ENCODE measurements at regions of chr7 and their contacts with region 1.

Region 1: GRCh38 chr7:9978106-9979064 is 995.3 kb upstream of the PHF14 start:
- DNase-seq: no peak
- ATAC-seq: no peak
- H3K4me3 Mint-ChIP-seq: no peak overlapping the region
- H3K27ac Mint-ChIP-seq: no peak overlapping the region
- H3K4me1 Mint-ChIP-seq: no peaks in the 10 kb centered on the region
- H3K27me3 Mint-ChIP-seq: no peaks in the 10 kb centered on the region

Region 2: DNA sequence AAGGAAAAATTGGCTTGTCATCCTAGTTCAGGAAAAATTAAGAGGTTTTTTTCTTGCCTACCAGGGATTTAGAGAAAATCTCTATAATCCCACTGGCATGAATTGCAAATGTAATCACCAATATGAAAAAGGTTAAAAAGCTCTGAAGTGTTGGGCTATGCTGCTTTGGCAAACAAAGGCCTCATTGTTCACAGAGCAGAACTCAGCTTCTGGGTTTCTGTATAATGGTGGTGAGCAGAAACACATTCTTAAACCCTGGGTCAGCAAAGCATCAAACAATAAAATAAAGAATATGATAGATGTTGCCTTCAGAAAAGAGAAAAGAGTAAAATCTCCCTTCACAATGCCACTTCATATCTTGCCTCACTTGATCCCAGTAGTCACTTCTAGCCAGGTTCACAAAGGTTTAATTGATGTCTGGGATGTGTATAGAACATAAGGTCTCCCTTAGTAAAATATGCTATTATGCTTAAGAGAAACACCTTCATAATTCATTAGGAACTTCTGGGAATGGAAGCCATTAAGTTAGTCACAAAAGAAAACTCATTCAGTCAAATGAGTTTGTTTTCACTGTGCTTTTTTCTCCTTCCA is 260.2 kb before region 1 on chr7:
- CTCF ChIA-PET with region 1: no interaction called
- POLR2A ChIA-PET with region 1: no interaction called
- intact Hi-C with region 1: no loop called
- DNase-seq: no peak
- ATAC-seq: no peak
- H3K4me3 Mint-ChIP-seq: no peak overlapping the region
- H3K27ac Mint-ChIP-seq: no peak overlapping the region
- H3K4me1 Mint-ChIP-seq: no peaks in the 10 kb centered on the region
- H3K27me3 Mint-ChIP-seq: no peaks in the 10 kb centered on the region

Region 3: GRCh38 chr7:9955138-9955537 is 23.2 kb before region 1 on chr7:
- CTCF ChIA-PET with region 1: no interaction called
- POLR2A ChIA-PET with region 1: no interaction called
- intact Hi-C with region 1: no loop called
- DNase-seq: no peak
- ATAC-seq: no peak
- H3K4me3 Mint-ChIP-seq: no peak overlapping the region
- H3K27ac Mint-ChIP-seq: no peak overlapping the region
- H3K4me1 Mint-ChIP-seq: no peaks in the 10 kb centered on the region
- H3K27me3 Mint-ChIP-seq: no peaks in the 10 kb centered on the region

Region 4: DNA sequence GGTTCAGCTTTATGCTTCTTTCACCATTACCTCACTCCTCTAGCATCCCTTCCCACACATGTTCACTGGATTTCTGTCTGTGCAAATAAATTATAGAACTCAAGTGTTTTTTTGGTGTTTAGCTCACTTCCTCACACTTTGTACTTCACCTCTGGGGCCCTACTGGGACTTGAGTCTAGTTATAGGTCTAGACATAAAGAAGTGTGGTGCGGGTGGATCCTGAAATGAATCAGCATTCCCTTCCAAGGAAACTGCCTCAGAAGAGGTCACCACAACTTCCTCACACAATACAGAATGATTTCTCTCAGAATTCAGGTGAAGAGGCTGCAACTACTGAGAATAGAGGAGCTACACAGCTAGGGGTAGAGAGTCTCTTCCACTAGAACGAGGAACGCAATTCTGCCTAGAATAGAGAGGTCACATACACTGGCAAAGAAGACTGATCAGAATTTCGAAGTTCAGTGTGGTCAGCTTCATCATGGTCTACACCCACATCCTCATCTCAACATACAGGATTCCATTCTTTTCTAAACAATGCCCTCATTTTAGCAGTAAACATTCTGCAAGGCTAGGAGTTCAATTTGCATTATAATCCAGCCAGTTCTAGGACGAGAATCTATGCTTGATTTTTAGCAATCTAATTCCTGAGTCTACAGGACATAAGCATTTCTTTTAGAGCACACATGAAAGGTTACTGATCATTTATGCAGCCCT is 56.6 kb after region 1 on chr7:
- CTCF ChIA-PET with region 1: no interaction called
- POLR2A ChIA-PET with region 1: no interaction called
- intact Hi-C with region 1: loop called in 1 of 2 experiments (anchors 10 kb)
- DNase-seq: peak; percentile 6
- ATAC-seq: peak; percentile 36
- H3K4me3 Mint-ChIP-seq: no peak overlapping the region
- H3K27ac Mint-ChIP-seq: no peak overlapping the region
- H3K4me1 Mint-ChIP-seq: peaks cover 4% of the 10 kb centered on the region
- H3K27me3 Mint-ChIP-seq: no peaks in the 10 kb centered on the region

Region 5: DNA sequence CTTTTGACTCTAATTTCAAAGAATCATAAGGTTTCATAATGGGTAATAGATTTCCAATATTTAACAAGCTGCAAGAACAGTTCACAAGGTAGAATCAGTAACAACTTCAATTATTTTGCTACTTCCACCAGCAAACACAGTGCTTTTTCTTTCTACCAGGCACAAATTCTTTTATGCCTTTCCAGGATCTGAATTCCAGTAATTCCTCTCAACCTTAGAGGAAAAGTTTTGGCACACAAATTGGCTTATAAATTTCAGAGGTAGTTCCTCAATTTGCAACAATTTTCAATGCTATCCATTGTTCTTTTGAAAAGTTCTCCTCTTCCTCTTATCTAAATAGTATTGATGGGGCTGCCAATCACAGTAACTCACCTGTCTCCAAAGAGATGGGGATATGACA is 329.9 kb after region 1 on chr7:
- CTCF ChIA-PET with region 1: no interaction called
- POLR2A ChIA-PET with region 1: no interaction called
- intact Hi-C with region 1: no loop called
- DNase-seq: no peak
- ATAC-seq: no peak
- H3K4me3 Mint-ChIP-seq: no peak overlapping the region
- H3K27ac Mint-ChIP-seq: no peak overlapping the region
- H3K4me1 Mint-ChIP-seq: no peaks in the 10 kb centered on the region
- H3K27me3 Mint-ChIP-seq: no peaks in the 10 kb centered on the region

Measured in activated CD4-positive, alpha-beta T cell treated with anti-CD3 and anti-CD28 coated beads for 36 hours (primary cell).